H1 (cell line): ENCODE measurements at regions of chr5 and their contacts with region 1.

Region 1: GRCh38 chr5:59390074-59390659 is 503.4 kb downstream of the PDE4D start:
- DNase-seq: no peak
- H3K4me3 ChIP-seq: no peak overlapping the region
- H3K27ac ChIP-seq: no peak overlapping the region
- H3K4me1 ChIP-seq: no peaks in the 10 kb centered on the region
- H3K27me3 ChIP-seq: no peaks in the 10 kb centered on the region
- CTCF ChIP-seq: peak in 2 of 3 experiments; percentile 20 to 45; a peak in 2 of 4 replicates
- EP300 ChIP-seq: no peak
- POLR2A ChIP-seq: no peak
- RAD21 ChIP-seq: peak in 1 of 2 experiments; percentile 70; a peak in 3 of 4 replicates

Region 2: GRCh38 chr5:59188419-59189225 is 201.5 kb before region 1 on chr5:
- CTCF ChIA-PET with region 1: interaction called, 25 read pairs
- POLR2A ChIA-PET with region 1: no interaction called
- DNase-seq: peak in 1 of 2 experiments; percentile 25
- H3K4me3 ChIP-seq: peak overlapping the region in 1 of 4 experiments; percentile 26; a peak in 1 of 8 replicates
- H3K27ac ChIP-seq: no peak overlapping the region
- H3K4me1 ChIP-seq: peaks cover 0 to 5% (median 2%) of the 10 kb centered on the region in 4 experiments; a peak in 3 of 7 replicates
- H3K27me3 ChIP-seq: no peaks in the 10 kb centered on the region
- CTCF ChIP-seq: peak; percentile 46 to 82 (median 71)
- EP300 ChIP-seq: no peak
- POLR2A ChIP-seq: no peak
- RAD21 ChIP-seq: peak; percentile 93 to 94

Region 3: DNA sequence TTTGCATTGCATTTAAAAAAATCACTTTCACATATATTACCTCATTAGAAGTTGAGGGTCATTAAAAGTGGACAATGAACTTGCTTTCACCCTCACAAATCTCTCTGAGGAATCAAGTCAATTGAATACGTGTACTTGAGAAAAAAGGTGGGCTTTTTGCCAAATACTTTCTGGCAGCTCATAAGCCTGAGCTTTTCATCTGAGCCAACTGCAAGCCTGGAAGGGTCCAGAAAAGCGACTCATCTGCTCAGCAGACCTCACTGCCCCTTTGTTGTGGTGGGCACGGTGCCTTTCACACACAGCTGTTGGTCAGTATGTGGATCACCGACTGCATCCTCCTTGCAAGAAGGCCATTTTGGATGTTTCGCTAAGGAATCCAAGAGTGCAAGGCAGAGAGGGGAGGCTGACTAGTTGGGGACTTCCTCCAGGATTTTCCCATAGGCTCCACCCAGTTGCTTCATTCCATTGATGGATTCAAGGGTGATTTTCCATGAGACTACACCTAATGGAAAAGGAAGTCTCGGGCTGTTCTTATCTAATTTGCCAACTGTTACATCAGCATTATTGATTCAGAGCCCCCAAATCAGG is 61.4 kb before region 1 on chr5:
- CTCF ChIA-PET with region 1: no interaction called
- POLR2A ChIA-PET with region 1: no interaction called
- DNase-seq: no peak
- H3K4me3 ChIP-seq: no peak overlapping the region
- H3K27ac ChIP-seq: no peak overlapping the region
- H3K4me1 ChIP-seq: no peaks in the 10 kb centered on the region
- H3K27me3 ChIP-seq: no peaks in the 10 kb centered on the region
- CTCF ChIP-seq: no peak
- EP300 ChIP-seq: no peak
- POLR2A ChIP-seq: no peak
- RAD21 ChIP-seq: no peak

Region 4: GRCh38 chr5:59487772-59488729 is 97.9 kb after region 1 on chr5:
- CTCF ChIA-PET with region 1: interaction called, 13 read pairs
- POLR2A ChIA-PET with region 1: no interaction called
- DNase-seq: no peak
- H3K4me3 ChIP-seq: no peak overlapping the region
- H3K27ac ChIP-seq: no peak overlapping the region
- H3K4me1 ChIP-seq: peaks cover 0 to 5% (median 0%) of the 10 kb centered on the region in 4 experiments; a peak in 2 of 7 replicates
- H3K27me3 ChIP-seq: no peaks in the 10 kb centered on the region
- CTCF ChIP-seq: no peak
- EP300 ChIP-seq: no peak
- POLR2A ChIP-seq: no peak
- RAD21 ChIP-seq: no peak

Region 5: DNA sequence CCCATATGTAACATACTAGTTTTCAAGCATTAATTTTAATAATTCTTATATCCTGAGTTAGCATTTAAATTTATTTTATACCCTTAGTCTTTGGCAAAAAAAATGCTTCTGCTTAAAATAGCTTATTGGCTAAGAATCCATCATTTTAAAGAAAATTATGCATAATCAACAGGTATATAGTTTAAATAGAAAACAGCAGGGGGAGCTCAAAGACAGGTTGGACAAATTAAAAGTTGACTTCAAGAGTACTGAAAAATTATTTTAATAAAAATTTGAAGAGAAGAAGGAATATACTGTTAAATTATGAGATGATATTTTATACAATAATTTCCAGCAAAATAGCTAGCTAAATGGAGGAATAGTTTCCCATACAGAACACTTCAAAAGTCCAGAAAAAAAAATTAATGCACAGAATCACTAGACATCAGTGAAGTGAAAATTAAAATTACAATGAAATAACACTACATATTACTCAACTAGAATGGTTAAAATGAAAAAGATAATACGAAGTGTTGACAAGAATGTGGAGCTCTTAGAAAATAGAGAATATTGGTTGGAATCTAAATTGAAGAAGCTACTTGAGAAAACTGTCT is 116.2 kb after region 1 on chr5:
- CTCF ChIA-PET with region 1: interaction called, 10 read pairs
- POLR2A ChIA-PET with region 1: no interaction called
- DNase-seq: no peak
- H3K4me3 ChIP-seq: no peak overlapping the region
- H3K27ac ChIP-seq: no peak overlapping the region
- H3K4me1 ChIP-seq: no peaks in the 10 kb centered on the region
- H3K27me3 ChIP-seq: no peaks in the 10 kb centered on the region
- CTCF ChIP-seq: peak in 1 of 3 experiments; percentile 13; a peak in 1 of 4 replicates
- EP300 ChIP-seq: no peak
- POLR2A ChIP-seq: no peak
- RAD21 ChIP-seq: peak; percentile 52 to 65

Region 6: GRCh38 chr5:59673438-59674058 is 283.4 kb after region 1 on chr5:
- CTCF ChIA-PET with region 1: interaction called, 42 read pairs
- POLR2A ChIA-PET with region 1: no interaction called
- DNase-seq: no peak
- H3K4me3 ChIP-seq: no peak overlapping the region
- H3K27ac ChIP-seq: no peak overlapping the region
- H3K4me1 ChIP-seq: no peaks in the 10 kb centered on the region
- H3K27me3 ChIP-seq: no peaks in the 10 kb centered on the region
- CTCF ChIP-seq: peak in 2 of 3 experiments; percentile 60 to 65; a peak in 3 of 4 replicates
- EP300 ChIP-seq: no peak
- POLR2A ChIP-seq: no peak
- RAD21 ChIP-seq: peak; percentile 81 to 87